ENCODE measurements at regions of chr17 and their contacts with region 1.

Region 1: GRCh38 chr17:75877752-75878173 is 618 bp downstream of the TRIM47 start:
- DNase-seq: no peak
- H3K4me3 ChIP-seq: peak overlapping the region; percentile 66 to 83
- H3K27ac ChIP-seq: peak overlapping the region; percentile 99
- H3K4me1 ChIP-seq: peaks cover 49% of the 10 kb centered on the region
- H3K27me3 ChIP-seq: no peaks in the 10 kb centered on the region
- CTCF ChIP-seq: no peak
- POLR2A ChIP-seq: no peak

Region 2: GRCh38 chr17:75764711-75765421 is 112.9 kb before region 1 on chr17 and contains the start of gene GALK1:
- intact Hi-C with region 1: loop called (anchors 10 kb)
- DNase-seq: peak in 1 of 2 donors; percentile 95
- H3K4me3 ChIP-seq: peak within 1 kb of the TSS; percentile 57 to 88
- H3K27ac ChIP-seq: peak within 1 kb of the TSS; percentile 91
- H3K4me1 ChIP-seq: peaks cover 20% of the 10 kb centered on the region
- H3K27me3 ChIP-seq: no peaks in the 10 kb centered on the region
- CTCF ChIP-seq: peak; percentile 32 to 49 (median 34)
- POLR2A ChIP-seq: peak in 1 of 2 donors; percentile 36
- total RNA-seq, gene GALK1: 18.4 TPM

Region 3: DNA sequence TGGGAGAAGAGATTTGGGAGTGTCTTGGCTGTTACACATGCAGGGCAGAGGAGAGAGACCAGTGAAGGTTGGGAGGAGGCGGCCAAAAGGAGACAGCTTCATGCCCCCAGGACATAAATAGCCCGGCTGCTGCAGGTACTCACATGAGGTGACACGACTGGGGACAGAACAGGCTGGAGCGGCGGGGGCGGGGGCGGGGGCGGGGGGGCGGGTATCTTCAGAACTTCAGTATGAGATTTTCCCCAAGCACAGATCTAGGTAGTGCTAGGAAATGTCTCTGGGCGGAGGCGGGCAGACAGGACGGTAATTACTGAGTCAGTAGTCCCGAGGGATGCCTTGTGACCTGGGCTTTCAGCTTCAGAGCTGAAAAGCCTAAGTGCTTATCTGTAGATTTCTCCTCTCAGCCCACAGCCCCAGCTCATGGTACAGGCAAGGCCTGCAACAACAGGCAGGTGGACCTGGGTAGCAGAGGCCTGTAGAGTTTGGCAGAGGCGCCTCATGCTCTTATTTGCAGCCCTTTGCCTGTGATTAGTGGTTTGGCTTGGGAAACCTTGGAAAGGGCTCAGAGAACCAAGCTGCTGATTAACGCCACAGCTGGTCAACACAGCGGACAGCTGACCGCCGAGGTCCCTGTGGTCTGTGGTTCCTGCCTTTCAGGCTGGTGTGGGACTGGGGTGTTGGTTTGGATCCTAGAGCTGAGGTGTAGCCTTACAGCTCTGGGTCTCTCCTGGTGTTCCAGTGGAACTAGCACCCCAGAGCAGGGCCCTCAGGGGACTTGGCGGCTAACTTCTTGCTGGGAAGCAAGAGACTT is 68.7 kb before region 1 on chr17:
- intact Hi-C with region 1: no loop called
- DNase-seq: no peak
- H3K4me3 ChIP-seq: peak overlapping the region in 1 of 2 donors; percentile 2
- H3K27ac ChIP-seq: peak overlapping the region; percentile 88
- H3K4me1 ChIP-seq: peaks cover 59% of the 10 kb centered on the region
- H3K27me3 ChIP-seq: no peaks in the 10 kb centered on the region
- CTCF ChIP-seq: no peak
- POLR2A ChIP-seq: no peak

Region 4: DNA sequence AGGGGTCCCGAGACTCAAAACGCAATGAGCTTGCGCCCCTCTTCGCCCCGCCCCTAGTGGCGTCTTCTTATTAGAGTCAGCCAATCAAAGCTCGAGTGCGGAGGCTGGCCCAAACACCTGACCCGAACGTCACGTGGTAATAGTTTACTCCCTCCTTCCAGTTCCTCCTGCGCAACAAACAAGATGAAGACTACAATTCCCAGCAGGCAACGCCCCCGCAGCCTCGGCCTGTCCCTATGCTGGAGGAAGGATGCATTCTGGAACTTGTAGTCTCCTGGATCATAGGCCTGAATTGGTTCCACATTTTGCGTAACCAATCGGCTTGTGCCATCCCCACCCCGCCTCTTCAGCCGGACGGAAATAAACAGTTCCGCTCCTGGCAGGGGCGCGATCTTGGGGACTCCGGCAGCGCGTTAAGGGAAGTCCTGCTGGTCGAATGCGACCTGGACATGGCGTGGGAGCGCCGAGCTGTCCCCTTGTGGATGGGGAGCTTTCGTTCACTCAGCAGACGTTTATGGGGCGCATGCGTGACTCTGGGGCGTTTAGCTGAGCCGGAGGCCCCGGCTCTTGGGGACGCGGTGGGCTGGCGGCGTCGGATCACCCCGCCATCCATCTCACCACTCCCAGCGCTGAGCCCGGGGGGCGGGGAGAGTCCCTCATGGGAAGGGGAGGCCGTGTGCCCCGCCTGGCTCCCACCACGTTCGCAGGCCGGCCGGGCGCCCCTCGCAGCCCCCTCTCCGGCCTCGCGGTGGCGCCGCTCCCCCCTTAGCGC is 22.3 kb before region 1 on chr17 and contains the start of gene WBP2:
- intact Hi-C with region 1: loop called (anchors 2 kb)
- DNase-seq: peak; percentile 100
- H3K4me3 ChIP-seq: peak within 1 kb of the TSS; percentile 81 to 97
- H3K27ac ChIP-seq: peak within 1 kb of the TSS; percentile 98
- H3K4me1 ChIP-seq: peaks cover 38% of the 10 kb centered on the region
- H3K27me3 ChIP-seq: no peaks in the 10 kb centered on the region
- CTCF ChIP-seq: peak in 2 of 3 experiments; percentile 5 to 43
- POLR2A ChIP-seq: peak; percentile 95 to 97
- total RNA-seq, gene WBP2: 54.3 TPM

Measured in vagina (tissue), 2 donors.